ENCODE measurements at regions of chr3 and their contacts with region 1.

Region 1: DNA sequence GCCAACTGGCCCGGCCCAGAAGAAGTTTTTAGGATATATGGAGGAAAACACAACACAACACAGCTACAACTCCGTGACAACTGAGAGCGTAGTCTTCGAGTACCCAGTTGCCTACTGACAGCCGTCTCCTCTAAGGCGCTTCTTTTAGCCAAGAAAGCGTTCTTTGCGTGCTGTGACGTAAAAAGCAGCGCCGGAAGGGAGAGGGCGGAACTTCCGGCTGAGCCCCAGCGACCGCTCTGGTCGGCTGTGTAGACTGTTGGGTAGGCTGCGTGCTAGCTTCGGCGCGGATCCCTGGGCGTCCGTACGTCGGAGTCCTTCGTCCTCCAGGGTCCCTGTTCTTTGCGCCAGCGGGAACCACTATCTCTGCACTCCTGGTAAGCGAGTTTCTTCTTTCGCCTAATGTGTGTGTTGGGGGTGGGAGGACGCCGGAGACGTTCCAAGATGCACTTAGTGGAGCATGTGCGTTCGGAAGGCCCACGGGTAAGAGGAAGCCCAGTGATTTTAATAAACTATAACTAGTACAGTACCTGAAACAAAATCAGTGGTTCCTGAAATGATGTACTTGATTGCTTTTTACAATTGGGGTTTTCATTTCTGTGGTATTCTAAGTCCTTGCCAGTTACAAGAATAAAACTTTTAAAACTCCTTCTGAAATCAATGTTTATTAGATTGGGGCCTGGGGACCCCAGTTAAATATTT is at the start of gene TRMT10C:
- DNase-seq: peak; percentile 77 to 94 (median 91)
- ATAC-seq: peak; percentile 98
- H3K4me3 ChIP-seq: peak within 1 kb of the TSS; percentile 94
- H3K4me3 Mint-ChIP-seq: peak within 1 kb of the TSS; percentile 95 to 99 (median 99)
- H3K27ac ChIP-seq: peak within 1 kb of the TSS; percentile 93
- H3K27ac Mint-ChIP-seq: peak within 1 kb of the TSS; percentile 93 to 99 (median 98)
- H3K4me1 ChIP-seq: peaks cover 8 to 14% of the 10 kb centered on the region in 2 donors
- H3K4me1 Mint-ChIP-seq: peaks cover 19 to 48% (median 38%) of the 10 kb centered on the region in 7 donors
- H3K27me3 ChIP-seq: no peaks in the 10 kb centered on the region
- H3K27me3 Mint-ChIP-seq: peaks cover 2 to 10% (median 3%) of the 10 kb centered on the region in 5 donors
- total RNA-seq, gene TRMT10C: 24.1 to 32.7 (median 27.1) TPM

Region 2: GRCh38 chr3:100334488-100335351 is 1227.1 kb before region 1 on chr3 and contains the start of gene NIT2:
- CTCF ChIA-PET with region 1: no interaction called
- POLR2A ChIA-PET with region 1: no interaction called
- intact Hi-C with region 1: loop called in 1 of 2 experiments (anchors 10 kb)
- DNase-seq: peak; percentile 49 to 79 (median 65)
- ATAC-seq: peak; percentile 97
- H3K4me3 ChIP-seq: peak within 1 kb of the TSS; percentile 72
- H3K4me3 Mint-ChIP-seq: peak within 1 kb of the TSS; percentile 86 to 99 (median 94)
- H3K27ac ChIP-seq: peak within 1 kb of the TSS; percentile 76
- H3K27ac Mint-ChIP-seq: peak within 1 kb of the TSS; percentile 87 to 97 (median 93)
- H3K4me1 ChIP-seq: peaks cover 8 to 12% of the 10 kb centered on the region in 2 donors
- H3K4me1 Mint-ChIP-seq: peaks cover 11 to 40% (median 30%) of the 10 kb centered on the region in 7 donors
- H3K27me3 ChIP-seq: no peaks in the 10 kb centered on the region
- H3K27me3 Mint-ChIP-seq: no peaks in the 10 kb centered on the region
- total RNA-seq, gene NIT2: 25.3 to 51.6 (median 30.6) TPM

Region 3: DNA sequence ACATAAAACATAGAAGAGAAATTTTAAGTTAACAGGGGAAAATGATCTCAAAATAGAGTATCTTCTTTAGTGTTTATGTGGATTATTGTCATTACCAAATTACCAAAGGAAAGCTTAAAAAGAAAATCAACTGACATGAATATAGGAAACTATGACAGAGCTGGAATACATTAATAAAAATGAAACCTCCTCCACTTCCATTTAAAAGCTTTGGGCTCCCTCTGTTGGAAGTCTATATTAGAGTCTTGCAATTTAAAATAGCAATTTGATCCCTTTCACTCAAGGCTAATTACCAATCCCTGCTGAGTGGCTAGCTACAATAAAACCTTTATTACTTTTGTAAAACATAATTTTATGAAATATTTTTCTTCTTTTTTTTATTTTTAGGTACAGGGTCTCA is 180.0 kb before region 1 on chr3:
- CTCF ChIA-PET with region 1: no interaction called
- POLR2A ChIA-PET with region 1: no interaction called
- intact Hi-C with region 1: loop called in 1 of 2 experiments (anchors 2 kb)
- DNase-seq: peak in 6 of 9 donors; percentile 10 to 42 (median 24)
- ATAC-seq: peak; percentile 69
- H3K4me3 ChIP-seq: no peak overlapping the region
- H3K4me3 Mint-ChIP-seq: no peak overlapping the region
- H3K27ac ChIP-seq: no peak overlapping the region
- H3K27ac Mint-ChIP-seq: peak overlapping the region in 1 of 9 donors; percentile 40
- H3K4me1 ChIP-seq: no peaks in the 10 kb centered on the region
- H3K4me1 Mint-ChIP-seq: peaks cover 31 to 89% (median 73%) of the 10 kb centered on the region in 7 donors
- H3K27me3 ChIP-seq: no peaks in the 10 kb centered on the region
- H3K27me3 Mint-ChIP-seq: no peaks in the 10 kb centered on the region

Region 4: DNA sequence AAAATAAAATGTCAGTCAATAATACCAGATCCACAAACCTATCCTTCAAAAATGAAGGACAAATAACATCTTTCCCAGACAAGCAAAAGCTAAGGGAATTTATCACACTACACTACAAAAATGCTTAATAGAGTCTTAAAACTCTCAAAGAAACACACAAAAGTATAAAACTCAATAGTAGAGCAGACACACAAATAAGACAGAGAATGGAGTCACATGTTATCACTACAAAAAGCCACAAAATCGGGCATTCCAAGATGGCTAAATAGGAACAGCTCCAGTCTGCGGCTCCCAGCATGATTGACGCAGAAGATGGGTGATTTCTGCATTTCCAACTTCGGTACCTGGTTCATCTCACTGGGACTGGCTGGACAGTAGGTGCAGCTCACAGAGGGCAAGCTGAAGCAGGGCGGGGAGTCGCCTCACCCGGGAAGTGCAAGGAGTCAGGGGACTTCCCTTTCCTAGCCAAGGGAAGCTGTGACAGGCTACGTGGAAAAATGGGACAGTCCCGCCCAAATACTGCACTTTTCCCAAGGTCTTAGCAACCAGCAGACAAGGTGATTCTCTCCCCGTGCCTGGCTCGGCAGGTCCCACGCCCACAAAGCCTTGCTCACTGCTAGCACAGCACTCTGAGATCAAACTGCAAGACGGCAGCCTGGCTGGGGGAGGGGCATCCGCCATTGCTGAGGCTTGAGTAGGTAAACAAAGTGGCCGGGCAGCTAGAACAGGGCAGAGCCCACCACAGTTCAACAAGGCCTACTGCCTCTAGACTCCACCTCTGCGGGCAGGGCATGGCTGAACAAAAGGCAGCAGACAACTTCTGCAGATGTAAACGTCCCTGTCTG is 95.1 kb before region 1 on chr3:
- CTCF ChIA-PET with region 1: no interaction called
- POLR2A ChIA-PET with region 1: no interaction called
- intact Hi-C with region 1: loop called in 1 of 2 experiments (anchors 1 kb)
- DNase-seq: peak in 8 of 9 donors; percentile 38 to 82 (median 58)
- ATAC-seq: peak; percentile 67
- H3K4me3 ChIP-seq: no peak overlapping the region
- H3K4me3 Mint-ChIP-seq: peak overlapping the region in 8 of 10 donors; percentile 4 to 86 (median 76)
- H3K27ac ChIP-seq: peak overlapping the region; percentile 63
- H3K27ac Mint-ChIP-seq: peak overlapping the region in 8 of 9 donors; percentile 52 to 96 (median 89)
- H3K4me1 ChIP-seq: peaks cover 3 to 17% of the 10 kb centered on the region in 2 donors
- H3K4me1 Mint-ChIP-seq: peaks cover 38 to 81% (median 72%) of the 10 kb centered on the region in 7 donors
- H3K27me3 ChIP-seq: no peaks in the 10 kb centered on the region
- H3K27me3 Mint-ChIP-seq: no peaks in the 10 kb centered on the region

Region 5: DNA sequence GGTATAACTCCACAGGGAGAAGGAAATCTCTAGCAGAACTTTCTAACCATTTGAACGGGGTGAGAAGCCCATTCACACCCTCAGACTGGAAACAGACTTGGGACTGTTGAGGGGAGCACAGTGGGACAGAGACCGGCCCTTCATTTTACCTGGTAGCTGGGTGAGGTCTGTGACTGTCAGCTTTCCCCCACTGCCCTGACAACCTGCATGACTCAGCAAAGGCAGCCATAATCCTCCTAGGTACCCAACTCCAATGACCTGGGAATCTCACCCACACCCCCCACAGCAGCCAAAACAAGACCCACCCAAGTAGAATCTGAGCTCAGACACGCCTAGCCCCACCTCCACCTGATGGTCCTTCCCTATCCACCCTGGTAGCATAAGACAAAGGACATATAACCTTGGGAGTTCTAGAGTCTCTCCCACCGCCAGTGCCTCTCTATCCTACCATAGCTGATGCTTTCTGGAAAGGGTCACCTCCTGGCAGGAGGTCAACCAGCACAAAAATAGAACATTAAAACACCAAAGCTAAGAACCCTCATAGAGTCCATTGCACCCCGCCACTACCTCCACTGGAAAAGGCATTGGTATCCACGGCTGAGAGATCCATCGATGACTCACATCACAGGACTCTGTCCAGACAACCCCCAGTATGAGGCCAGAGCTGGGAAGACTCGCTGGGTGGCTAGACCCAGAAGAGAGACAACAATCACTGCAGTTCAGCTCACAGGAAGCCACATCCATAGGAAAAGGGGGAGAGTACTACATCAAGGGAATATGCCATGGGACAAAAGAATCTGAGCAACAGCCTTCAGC is 76.8 kb before region 1 on chr3:
- CTCF ChIA-PET with region 1: no interaction called
- POLR2A ChIA-PET with region 1: no interaction called
- intact Hi-C with region 1: no loop called
- DNase-seq: no peak
- ATAC-seq: no peak
- H3K4me3 ChIP-seq: no peak overlapping the region
- H3K4me3 Mint-ChIP-seq: peak overlapping the region in 6 of 10 donors; percentile 4 to 56 (median 26)
- H3K27ac ChIP-seq: no peak overlapping the region
- H3K27ac Mint-ChIP-seq: peak overlapping the region in 8 of 9 donors; percentile 17 to 82 (median 60)
- H3K4me1 ChIP-seq: no peaks in the 10 kb centered on the region
- H3K4me1 Mint-ChIP-seq: peaks cover 29 to 94% (median 74%) of the 10 kb centered on the region in 7 donors
- H3K27me3 ChIP-seq: no peaks in the 10 kb centered on the region
- H3K27me3 Mint-ChIP-seq: no peaks in the 10 kb centered on the region

Region 6: DNA sequence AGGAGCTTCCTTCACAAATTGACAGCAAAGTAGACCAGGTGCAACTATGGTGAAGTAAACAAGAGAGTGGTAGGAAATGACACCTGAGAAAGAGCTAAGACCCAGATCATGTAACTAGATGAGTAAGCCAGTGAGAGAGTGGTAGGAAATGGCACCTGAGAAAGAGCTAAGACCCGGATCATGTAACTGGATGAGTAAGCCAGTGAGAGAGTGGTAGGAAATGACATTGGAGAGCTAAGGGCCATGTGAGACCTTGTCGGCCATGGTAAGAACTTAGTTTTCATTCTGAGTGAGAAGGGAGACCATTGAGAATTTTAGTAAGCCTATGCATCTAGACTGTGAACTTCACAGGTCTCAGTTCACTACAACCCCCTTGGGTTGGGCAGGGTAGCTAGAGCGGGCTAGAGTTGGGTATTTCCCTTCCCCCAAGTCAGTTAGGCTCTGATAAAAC is 43.3 kb before region 1 on chr3:
- CTCF ChIA-PET with region 1: interaction called, 3 read pairs
- POLR2A ChIA-PET with region 1: interaction called, 15 read pairs
- intact Hi-C with region 1: loop called (anchors 1 kb)
- DNase-seq: peak in 8 of 9 donors; percentile 40 to 82 (median 76)
- ATAC-seq: peak; percentile 91
- H3K4me3 ChIP-seq: peak overlapping the region; percentile 17
- H3K4me3 Mint-ChIP-seq: peak overlapping the region; percentile 35 to 82 (median 62)
- H3K27ac ChIP-seq: peak overlapping the region; percentile 77
- H3K27ac Mint-ChIP-seq: peak overlapping the region; percentile 87 to 98 (median 96)
- H3K4me1 ChIP-seq: peaks cover 54 to 62% of the 10 kb centered on the region in 2 donors
- H3K4me1 Mint-ChIP-seq: peaks cover 20 to 80% (median 71%) of the 10 kb centered on the region in 7 donors
- H3K27me3 ChIP-seq: no peaks in the 10 kb centered on the region
- H3K27me3 Mint-ChIP-seq: no peaks in the 10 kb centered on the region

Measured in naive thymus-derived CD4-positive, alpha-beta T cell (primary cell).